ENCODE measurements at regions of chr6 and their contacts with region 1.

Region 1: DNA sequence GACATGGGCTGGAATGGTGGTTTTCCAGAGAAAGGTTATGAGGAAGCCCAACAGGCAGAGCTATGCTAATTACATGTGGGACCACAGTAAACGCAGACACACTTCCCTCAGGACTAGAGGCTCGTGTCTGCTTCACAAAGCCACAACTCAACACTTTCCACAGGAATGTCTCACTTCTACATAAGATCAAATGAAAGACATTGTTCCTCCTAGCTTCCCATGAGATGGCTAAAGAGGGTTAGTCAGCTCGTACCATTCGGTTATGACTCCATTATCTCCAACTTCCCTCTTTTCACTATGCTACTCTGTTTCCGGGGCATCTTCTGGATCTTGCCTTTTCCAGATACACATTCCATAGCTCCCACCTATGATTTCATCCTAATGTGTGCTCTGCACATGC is 29.1 kb upstream of the ZC3H12D start:
- DNase-seq: no peak
- H3K4me3 ChIP-seq: no peak overlapping the region
- H3K27ac ChIP-seq: no peak overlapping the region
- H3K4me1 ChIP-seq: no peaks in the 10 kb centered on the region
- H3K27me3 ChIP-seq: no peaks in the 10 kb centered on the region
- CTCF ChIP-seq: no peak
- POLR2A ChIP-seq: no peak

Region 2: GRCh38 chr6:149082286-149082707 is 431.6 kb before region 1 on chr6:
- CTCF ChIA-PET with region 1: interaction called, 15 read pairs
- POLR2A ChIA-PET with region 1: no interaction called
- dilution Hi-C with region 1: no loop called
- intact Hi-C with region 1: loop called (anchors 1 kb)
- DNase-seq: peak; percentile 62
- H3K4me3 ChIP-seq: no peak overlapping the region
- H3K27ac ChIP-seq: no peak overlapping the region
- H3K4me1 ChIP-seq: no peaks in the 10 kb centered on the region
- H3K27me3 ChIP-seq: peaks cover 18 to 25% of the 10 kb centered on the region in 2 experiments
- CTCF ChIP-seq: peak; percentile 74 to 81
- POLR2A ChIP-seq: no peak

Region 3: GRCh38 chr6:149503276-149503675 is 10.6 kb before region 1 on chr6:
- CTCF ChIA-PET with region 1: interaction called, 10 read pairs
- POLR2A ChIA-PET with region 1: no interaction called
- dilution Hi-C with region 1: no loop called
- intact Hi-C with region 1: no loop called
- DNase-seq: no peak
- H3K4me3 ChIP-seq: no peak overlapping the region
- H3K27ac ChIP-seq: no peak overlapping the region
- H3K4me1 ChIP-seq: no peaks in the 10 kb centered on the region
- H3K27me3 ChIP-seq: no peaks in the 10 kb centered on the region
- CTCF ChIP-seq: no peak
- POLR2A ChIP-seq: no peak

Measured in endothelial cell of umbilical vein (primary cell).